Ovary (tissue), 10 donors: ENCODE measurements at regions of chr6 and their contacts with region 1.

Region 1: DNA sequence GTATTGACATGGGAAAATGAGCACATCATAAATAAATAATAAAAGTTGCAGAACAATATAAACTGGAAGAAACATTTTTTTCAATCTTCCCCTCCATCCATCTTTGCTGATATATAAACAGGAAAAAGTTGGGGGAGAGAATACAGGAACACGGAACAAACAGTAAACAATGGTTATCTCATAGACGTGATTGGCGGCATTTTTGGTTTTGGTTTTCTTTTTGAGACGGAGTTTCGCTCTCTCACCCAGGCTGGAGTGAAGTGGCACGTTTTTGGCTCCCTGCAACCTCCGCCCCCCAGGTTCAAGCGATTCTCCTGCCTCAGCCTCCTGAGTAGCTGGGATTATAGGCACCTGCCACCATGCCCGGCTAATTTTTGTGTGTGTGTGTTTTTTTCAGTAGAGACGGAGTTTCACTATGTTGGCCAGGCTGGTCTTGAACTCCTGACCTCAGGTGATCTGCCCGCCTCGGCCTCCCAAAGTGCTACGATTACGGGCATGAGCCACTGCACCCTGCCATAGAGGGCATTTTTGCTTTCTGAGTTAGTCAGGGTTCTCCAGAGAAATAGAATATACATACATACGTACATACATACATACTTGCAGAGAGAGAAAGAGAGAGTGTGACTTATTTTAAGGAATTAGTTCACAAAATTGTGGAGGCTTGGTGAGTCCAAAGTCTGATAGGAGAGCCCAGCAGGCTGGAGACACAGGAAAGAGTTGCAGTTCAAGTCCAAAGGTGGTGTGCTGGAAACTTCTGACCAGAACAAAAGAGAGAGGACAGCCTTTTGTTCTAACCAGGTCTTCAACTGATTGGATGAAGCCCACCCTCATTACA is 22.6 kb downstream of the GNL1 start:
- DNase-seq: no peak
- H3K4me3 ChIP-seq: no peak overlapping the region
- H3K27ac ChIP-seq: no peak overlapping the region
- H3K4me1 ChIP-seq: no peaks in the 10 kb centered on the region
- H3K27me3 ChIP-seq: no peaks in the 10 kb centered on the region
- CTCF ChIP-seq: no peak
- EP300 ChIP-seq: no peak
- POLR2A ChIP-seq: no peak

Region 2: DNA sequence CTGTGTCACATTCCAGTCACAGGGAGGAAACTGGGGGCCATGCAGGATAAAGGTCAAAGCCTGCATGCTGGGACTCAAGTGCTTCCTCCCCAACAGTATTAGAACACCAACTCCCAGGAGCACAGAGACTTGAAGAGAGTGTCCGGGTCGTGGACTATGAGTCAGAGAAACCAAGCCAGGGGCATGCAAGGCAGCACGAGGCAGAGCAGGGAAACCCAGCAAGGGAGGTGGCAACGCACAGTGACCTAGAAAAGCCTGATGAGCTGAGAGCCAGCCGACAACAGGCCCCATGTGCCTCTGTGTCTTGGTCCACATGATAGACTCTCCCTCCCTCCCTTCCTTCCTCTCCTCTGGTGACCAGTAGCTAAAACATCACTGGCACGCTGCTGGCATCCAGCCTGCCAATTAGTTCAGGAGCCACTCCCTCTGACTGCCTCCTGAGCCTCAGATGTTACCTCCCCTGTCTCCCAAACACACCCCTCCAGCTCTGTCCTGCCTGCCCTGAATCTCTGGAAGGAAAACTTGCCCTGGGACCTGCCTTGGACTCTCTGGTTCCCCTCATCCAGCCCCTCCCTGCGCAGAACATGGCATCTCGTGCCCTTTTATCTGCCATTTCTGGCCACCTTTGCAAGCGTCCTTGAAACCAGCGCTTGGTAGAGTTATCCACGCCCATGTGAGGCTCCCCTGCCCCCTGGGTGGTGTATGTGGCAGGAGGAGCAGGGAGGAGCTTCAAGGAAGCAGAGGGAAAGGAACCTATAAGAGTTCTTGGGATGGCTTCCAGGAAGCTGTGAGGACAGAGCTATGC is 441.9 kb before region 1 on chr6:
- intact Hi-C with region 1: no loop called
- DNase-seq: no peak
- H3K4me3 ChIP-seq: no peak overlapping the region
- H3K27ac ChIP-seq: no peak overlapping the region
- H3K4me1 ChIP-seq: no peaks in the 10 kb centered on the region
- H3K27me3 ChIP-seq: no peaks in the 10 kb centered on the region
- CTCF ChIP-seq: no peak
- EP300 ChIP-seq: no peak
- POLR2A ChIP-seq: no peak

Region 3: GRCh38 chr6:30483677-30484279 is 49.9 kb before region 1 on chr6:
- intact Hi-C with region 1: loop called in 3 of 4 experiments (anchors 5 to 10 kb)
- DNase-seq: no peak
- H3K4me3 ChIP-seq: no peak overlapping the region
- H3K27ac ChIP-seq: no peak overlapping the region
- H3K4me1 ChIP-seq: no peaks in the 10 kb centered on the region
- H3K27me3 ChIP-seq: peaks cover 2% of the 10 kb centered on the region
- CTCF ChIP-seq: peak in 2 of 3 donors; percentile 51 to 63
- EP300 ChIP-seq: no peak
- POLR2A ChIP-seq: no peak

Region 4: GRCh38 chr6:30489081-30490025 is 44.3 kb before region 1 on chr6 and contains the start of gene HLA-E:
- intact Hi-C with region 1: loop called in 3 of 4 experiments (anchors 5 to 10 kb)
- DNase-seq: peak; percentile 88 to 97 (median 92)
- H3K4me3 ChIP-seq: peak within 1 kb of the TSS; percentile 57
- H3K27ac ChIP-seq: peak within 1 kb of the TSS; percentile 84 to 98
- H3K4me1 ChIP-seq: peaks cover 4% of the 10 kb centered on the region
- H3K27me3 ChIP-seq: no peaks in the 10 kb centered on the region
- CTCF ChIP-seq: no peak
- EP300 ChIP-seq: peak; percentile 99
- POLR2A ChIP-seq: peak; percentile 98
- total RNA-seq, gene HLA-E: 181 to 322 (median 238) TPM